A673 (cell line): ENCODE measurements at regions of chr17 and their contacts with region 1.

Region 1: DNA sequence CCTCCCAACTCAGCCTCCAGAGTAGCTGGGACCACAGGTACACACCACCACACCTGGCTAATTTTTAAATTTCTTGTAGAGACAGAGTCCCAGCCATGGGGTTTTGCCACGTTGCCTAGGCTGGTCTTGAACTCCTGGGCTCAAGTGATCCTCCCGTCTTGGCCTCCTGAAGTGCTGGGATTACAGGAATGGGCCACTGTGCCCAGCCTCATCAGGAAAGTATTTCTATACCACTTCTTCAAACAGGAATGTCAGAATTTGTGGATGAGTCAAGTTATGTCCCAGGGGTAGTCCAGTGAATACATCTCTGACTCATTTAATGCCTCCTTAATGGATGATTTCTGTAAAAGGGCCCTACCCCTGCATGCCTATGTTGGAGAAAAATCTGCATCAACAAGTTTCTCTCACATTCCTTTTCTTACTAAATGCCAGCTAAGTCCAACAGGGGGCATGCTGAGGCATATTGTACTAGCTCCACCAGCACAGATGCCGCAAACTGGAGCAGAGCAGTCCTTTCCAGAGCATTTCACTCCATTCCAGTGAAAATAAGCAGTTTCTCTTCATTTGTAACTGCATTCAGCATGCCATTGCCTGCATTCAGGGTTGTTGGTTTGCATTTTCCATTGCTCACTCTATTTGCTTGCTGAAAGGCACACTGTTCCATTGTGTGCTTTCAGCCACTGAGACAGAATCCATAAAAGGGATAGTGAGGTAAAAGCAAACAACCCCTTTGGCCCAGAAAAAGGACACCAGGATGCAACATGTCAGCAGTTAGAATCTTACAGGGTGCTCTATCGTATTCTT is 5.3 kb upstream of the CAVIN1 start:
- DNase-seq: peak; percentile 83
- H3K4me3 ChIP-seq: no peak overlapping the region
- H3K27ac ChIP-seq: no peak overlapping the region
- H3K4me1 ChIP-seq: no peaks in the 10 kb centered on the region
- H3K27me3 ChIP-seq: no peaks in the 10 kb centered on the region
- CTCF ChIP-seq: peak; percentile 60

Region 2: GRCh38 chr17:42517516-42517915 is 89.2 kb after region 1 on chr17:
- CTCF ChIA-PET with region 1: no interaction called
- POLR2A ChIA-PET with region 1: no interaction called
- intact Hi-C with region 1: loop called (anchors 1 kb)
- DNase-seq: peak; percentile 72
- H3K4me3 ChIP-seq: no peak overlapping the region
- H3K27ac ChIP-seq: no peak overlapping the region
- H3K4me1 ChIP-seq: peaks cover 29% of the 10 kb centered on the region
- H3K27me3 ChIP-seq: no peaks in the 10 kb centered on the region
- CTCF ChIP-seq: peak; percentile 87

Region 3: GRCh38 chr17:42706732-42707131 is 278.4 kb after region 1 on chr17:
- CTCF ChIA-PET with region 1: no interaction called
- POLR2A ChIA-PET with region 1: no interaction called
- intact Hi-C with region 1: no loop called
- DNase-seq: no peak
- H3K4me3 ChIP-seq: no peak overlapping the region
- H3K27ac ChIP-seq: no peak overlapping the region
- H3K4me1 ChIP-seq: no peaks in the 10 kb centered on the region
- H3K27me3 ChIP-seq: no peaks in the 10 kb centered on the region
- CTCF ChIP-seq: no peak